ENCODE measurements at regions of chr7 and their contacts with region 1.

Region 1: DNA sequence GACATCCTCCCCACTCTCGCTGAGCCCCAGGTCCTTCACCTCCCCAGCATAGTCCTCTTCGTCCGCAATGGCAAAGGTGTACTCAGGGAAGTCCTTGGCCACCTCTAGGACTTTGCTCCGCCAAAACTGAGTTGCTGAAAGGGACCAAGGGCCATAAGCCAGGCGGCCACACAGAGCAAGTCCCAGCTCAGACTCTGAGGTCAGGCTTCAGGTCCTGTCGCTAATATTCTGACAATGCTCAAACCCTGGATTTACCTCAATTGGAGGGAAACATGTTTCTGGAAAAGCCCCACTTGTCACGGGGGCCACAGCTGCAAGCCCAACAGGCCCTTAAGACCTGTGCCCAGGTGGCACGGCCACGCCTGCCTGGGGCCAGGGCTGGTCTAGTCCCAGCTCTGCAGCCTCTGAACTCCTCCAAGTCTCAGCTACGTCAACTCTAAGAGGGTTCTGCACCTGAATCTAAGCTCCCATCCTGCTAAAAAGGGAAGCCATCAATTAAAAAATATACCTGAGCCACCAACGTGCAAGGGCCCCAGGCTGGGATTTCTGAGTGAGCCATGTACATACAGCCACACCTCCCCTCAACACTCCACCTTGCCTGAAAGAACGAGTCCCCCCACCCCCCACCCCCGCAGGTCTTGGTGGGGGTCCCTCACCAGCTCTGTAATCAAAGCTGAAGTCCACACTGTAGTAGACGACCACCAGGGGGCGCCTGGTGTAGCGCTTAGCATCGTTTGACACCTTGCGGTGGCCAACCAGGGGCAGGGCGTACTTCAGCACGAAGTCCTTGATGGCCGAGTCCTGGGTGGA is 22.9 kb downstream of the PDIA4 start:
- DNase-seq: peak; percentile 69 to 93
- ATAC-seq: peak; percentile 86

Region 2: DNA sequence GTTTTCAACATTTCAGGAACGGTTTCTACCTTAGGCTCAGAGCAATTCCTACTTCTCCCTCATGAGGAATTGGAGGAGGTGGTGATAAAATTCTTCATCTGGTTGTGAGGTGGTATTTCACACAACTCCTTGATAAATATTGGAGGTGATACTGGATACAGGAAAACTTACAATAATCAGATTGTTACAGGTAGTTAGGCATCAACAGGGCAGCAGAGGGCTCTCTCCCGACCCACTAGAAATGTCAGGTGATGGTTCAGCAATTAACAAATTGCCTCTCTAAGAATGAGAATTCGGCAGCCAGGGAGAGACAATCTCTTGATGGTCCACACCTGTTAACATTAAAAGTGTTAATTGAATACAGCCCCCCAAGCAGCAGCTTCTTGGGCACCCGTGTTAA is 62.4 kb after region 1 on chr7:
- intact Hi-C with region 1: loop called in 1 of 2 experiments (anchors 10 kb)
- DNase-seq: no peak
- ATAC-seq: no peak

Region 3: DNA sequence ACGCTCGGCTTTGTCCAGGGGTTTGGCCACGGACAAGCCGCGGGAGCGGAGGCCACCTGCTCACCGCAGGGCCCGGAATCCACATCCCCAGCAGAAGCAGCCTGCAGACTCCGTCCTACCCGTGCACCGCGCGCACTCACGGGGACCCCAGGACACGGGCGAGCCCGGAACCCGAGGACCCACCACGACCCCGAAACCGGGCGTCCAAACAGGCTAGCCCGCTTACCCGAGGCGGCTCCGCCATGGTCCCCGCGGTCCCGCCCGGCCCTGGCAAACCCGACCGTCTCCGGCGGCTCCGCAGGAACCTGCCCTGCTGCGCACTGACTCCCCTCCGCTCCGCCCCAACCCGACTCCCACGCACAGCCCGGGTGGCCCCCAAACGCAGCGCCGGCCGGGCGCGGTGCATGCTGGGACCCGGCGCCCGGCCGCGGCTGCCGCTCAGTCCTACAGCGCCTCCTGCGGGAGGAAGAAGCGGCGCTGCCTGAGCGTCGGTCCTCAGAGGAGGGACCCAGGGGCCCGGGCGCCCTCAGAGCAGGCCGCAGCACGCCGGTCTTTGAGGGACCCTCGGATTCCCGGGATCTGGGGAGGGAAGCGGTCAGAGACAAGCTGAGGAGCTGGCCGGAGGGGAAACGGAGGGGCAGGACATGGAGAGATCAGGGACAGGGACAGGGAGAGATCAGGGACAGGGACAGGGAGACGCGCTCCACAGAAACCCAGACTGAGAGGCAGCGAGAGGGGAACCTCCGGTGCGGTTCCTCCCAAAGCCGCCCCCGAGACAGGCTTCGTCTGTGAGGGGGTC is 85.2 kb after region 1 on chr7 and contains the start of gene ZNF786:
- intact Hi-C with region 1: loop called in 1 of 2 experiments (anchors 10 kb)
- DNase-seq: peak; percentile 84 to 87
- ATAC-seq: peak; percentile 91
- total RNA-seq, gene ZNF786: 3.9 to 6.1 TPM

Measured in left colon (tissue), 2 donors.